ENCODE measurements at regions of chr7 and their contacts with region 1.

Region 1: DNA sequence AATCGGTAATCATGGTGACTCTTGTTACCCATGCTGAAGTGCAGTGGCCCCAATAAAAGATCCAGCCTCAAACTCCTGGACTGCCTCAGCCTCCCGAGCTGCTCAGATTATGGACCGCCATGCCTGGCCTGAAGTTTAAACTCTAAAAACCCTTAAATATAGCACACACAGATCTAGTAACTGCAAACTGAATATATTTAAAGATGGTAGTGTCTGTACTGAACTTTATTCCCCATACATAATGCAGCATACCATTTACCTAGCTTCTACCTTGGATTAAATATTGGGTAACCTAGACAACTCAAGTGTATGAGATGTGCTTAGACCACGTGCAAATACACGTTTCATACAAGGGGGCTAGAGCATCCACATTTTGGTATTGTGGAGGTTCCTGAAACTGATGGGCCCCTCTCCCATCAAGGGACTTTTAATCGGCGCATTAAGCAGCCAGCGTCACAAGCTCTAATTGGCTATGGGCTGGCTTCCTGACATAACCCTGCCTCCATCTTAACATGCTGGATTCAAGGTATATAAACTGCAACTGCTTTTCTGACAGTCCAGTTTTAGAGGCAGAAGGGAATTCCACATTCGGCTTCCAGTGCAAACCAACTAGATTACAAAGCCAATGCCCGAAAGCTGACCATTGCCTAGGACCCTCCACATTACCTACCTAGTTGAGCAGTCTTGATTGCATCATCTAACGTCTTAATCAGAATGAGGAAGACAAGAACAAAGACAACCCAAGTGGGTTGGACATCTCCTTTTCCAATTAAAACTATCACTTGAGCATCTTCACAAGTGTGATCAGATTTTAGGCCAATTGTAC is 13.0 kb downstream of the HNRNPA2B1 start:
- DNase-seq: no peak
- ATAC-seq: peak; percentile 18
- H3K4me3 ChIP-seq: no peak overlapping the region
- H3K4me3 Mint-ChIP-seq: peak overlapping the region; percentile 21
- H3K27ac ChIP-seq: peak overlapping the region in 1 of 2 donors; percentile 0
- H3K27ac Mint-ChIP-seq: peak overlapping the region; percentile 54
- H3K4me1 ChIP-seq: peaks cover 21% of the 10 kb centered on the region
- H3K4me1 Mint-ChIP-seq: peaks cover 90% of the 10 kb centered on the region
- H3K27me3 ChIP-seq: no peaks in the 10 kb centered on the region
- H3K27me3 Mint-ChIP-seq: no peaks in the 10 kb centered on the region
- CTCF ChIP-seq: no peak

Region 2: GRCh38 chr7:26167301-26167934 is 20.2 kb before region 1 on chr7:
- CTCF ChIA-PET with region 1: no interaction called
- POLR2A ChIA-PET with region 1: interaction called, 14 read pairs
- intact Hi-C with region 1: no loop called
- DNase-seq: peak in 4 of 14 experiments; percentile 36 to 79 (median 67)
- ATAC-seq: peak; percentile 46
- H3K4me3 ChIP-seq: no peak overlapping the region
- H3K4me3 Mint-ChIP-seq: no peak overlapping the region
- H3K27ac ChIP-seq: peak overlapping the region in 1 of 2 donors; percentile 39
- H3K27ac Mint-ChIP-seq: peak overlapping the region; percentile 30
- H3K4me1 ChIP-seq: peaks cover 20% of the 10 kb centered on the region
- H3K4me1 Mint-ChIP-seq: peaks cover 20% of the 10 kb centered on the region
- H3K27me3 ChIP-seq: no peaks in the 10 kb centered on the region
- H3K27me3 Mint-ChIP-seq: no peaks in the 10 kb centered on the region
- CTCF ChIP-seq: no peak